Calu3 (cell line): ENCODE measurements at regions of chr1 and their contacts with region 1.

Region 1: GRCh38 chr1:3649342-3650247 is at the start of gene WRAP73:
- DNase-seq: peak; percentile 83
- H3K4me3 Mint-ChIP-seq: peak within 1 kb of the TSS; percentile 74
- H3K27ac Mint-ChIP-seq: no peak within 1 kb of the TSS
- H3K4me1 Mint-ChIP-seq: no peaks in the 10 kb centered on the region
- H3K27me3 Mint-ChIP-seq: peaks cover 29% of the 10 kb centered on the region
- CTCF ChIP-seq: no peak
- total RNA-seq, gene WRAP73: 14.9 and 18.6 TPM in 2 replicates

Region 2: DNA sequence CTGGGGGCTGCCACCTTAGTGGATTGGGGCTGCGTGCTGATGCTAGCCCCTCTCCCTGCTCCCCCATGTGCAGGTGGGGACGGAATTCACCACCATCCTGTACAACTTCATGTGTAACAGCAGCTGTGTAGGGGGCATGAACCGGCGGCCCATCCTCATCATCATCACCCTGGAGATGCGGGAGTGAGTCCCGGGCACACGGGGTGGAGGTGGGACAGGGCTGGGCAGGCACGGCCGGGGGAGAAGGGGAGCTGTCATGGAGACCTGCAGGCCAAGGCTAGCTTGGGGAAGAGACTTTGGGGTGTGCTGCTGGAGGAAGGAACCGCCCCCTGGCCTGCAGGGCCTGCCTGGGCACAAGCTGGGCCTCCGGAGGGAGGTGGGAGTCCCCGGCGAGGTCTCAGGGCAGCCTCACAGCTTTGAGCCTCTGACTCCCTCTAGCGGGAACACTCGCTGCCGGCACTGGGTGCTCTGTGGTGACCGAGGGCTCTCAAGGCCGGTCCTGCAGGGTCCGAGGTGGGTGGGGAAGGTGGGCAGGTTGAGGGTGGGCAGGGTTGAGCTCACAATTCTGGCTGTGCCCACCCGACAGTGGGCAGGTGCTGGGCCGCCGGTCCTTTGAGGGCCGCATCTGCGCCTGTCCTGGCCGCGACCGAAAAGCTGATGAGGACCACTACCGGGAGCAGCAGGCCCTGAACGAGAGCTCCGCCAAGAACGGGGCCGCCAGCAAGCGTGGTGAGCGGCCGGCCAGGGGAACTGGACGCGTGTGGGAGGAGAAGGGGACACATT is 77.6 kb after region 1 on chr1:
- CTCF ChIA-PET with region 1: interaction called, 4 read pairs
- intact Hi-C with region 1: loop called (anchors 10 kb)
- DNase-seq: no peak
- H3K4me3 Mint-ChIP-seq: no peak overlapping the region
- H3K27ac Mint-ChIP-seq: no peak overlapping the region
- H3K4me1 Mint-ChIP-seq: no peaks in the 10 kb centered on the region
- H3K27me3 Mint-ChIP-seq: peaks cover 8% of the 10 kb centered on the region
- CTCF ChIP-seq: no peak